ENCODE measurements at regions of chr12 and their contacts with region 1.

Region 1: DNA sequence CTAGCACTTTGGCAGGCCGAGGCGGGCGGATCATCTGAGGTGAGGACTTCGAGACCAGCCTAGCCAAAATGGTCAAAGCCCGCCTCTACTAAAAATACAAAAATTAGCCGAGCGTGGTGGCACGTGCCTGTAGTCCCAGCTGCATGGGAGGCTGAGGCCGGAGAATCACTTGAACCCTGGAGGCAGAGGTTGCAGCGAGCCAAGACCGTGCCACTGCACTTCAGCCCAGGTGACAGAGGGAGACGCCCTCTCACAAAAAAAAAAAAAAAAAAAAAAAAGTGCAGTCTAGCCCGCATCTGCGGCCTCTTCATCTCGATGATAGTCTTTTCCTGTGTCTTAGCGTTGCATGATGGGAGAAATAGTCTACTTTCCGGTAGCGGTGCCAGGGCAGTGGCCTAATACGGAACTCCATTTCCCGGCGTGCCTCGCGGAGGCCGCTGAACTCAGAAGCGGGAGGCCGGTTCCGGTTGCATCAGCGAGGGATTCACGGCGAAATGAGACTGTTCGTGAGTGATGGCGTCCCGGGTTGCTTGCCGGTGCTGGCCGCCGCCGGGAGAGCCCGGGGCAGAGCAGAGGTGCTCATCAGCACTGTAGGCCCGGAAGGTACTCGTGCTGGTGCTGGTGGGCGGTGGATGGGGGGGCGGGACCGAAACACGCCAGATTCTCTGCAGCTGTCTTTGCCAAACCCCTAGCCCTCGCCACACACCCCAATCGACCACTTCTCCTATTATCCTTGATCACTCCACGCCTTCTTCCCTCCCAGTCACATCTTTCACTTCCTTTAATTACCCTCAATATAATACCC is at the start of gene MARS1:
- DNase-seq: peak; percentile 93 to 99 (median 96)

Region 2: DNA sequence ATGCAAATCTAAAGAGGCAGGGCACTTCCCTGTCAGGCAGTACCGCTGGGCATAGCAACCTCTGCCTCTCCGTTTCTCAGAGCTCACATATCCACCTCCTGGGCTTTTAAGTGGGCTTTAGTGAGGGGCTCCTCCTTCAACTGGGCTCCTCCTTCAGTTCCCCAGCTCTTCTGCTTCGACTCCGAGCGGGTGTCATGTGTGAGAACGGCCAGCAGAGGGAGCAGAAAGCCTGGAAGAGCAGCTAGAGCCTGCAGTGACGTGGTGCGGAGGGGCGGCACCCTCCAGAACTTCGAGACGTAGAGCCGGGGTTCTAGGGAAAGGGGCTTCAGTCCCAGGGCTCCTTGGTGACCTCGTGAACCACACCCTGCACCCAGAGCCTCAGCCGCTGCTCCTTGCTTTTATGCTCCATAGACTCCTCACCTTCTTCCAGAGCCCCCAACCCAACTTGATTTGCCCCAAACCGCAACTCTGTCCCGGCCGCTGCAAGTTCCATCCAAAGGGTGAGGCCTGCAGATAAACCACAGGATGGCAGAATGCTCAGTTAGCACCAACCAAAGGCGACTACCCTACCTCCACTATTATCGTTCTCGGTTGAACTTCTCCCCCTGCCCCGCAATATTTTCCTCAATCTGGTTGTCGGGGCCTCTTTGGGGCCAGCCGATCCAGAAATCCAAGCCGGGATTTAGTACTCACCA is 28.6 kb before region 1 on chr12:
- intact Hi-C with region 1: loop called (anchors 2 kb)
- DNase-seq: peak; percentile 89 to 98 (median 94)

Region 3: GRCh38 chr12:57522011-57522886 is 34.5 kb after region 1 on chr12 and contains the start of gene MBD6:
- intact Hi-C with region 1: loop called (anchors 2 kb)
- DNase-seq: peak; percentile 87 to 99 (median 91)

Region 4: DNA sequence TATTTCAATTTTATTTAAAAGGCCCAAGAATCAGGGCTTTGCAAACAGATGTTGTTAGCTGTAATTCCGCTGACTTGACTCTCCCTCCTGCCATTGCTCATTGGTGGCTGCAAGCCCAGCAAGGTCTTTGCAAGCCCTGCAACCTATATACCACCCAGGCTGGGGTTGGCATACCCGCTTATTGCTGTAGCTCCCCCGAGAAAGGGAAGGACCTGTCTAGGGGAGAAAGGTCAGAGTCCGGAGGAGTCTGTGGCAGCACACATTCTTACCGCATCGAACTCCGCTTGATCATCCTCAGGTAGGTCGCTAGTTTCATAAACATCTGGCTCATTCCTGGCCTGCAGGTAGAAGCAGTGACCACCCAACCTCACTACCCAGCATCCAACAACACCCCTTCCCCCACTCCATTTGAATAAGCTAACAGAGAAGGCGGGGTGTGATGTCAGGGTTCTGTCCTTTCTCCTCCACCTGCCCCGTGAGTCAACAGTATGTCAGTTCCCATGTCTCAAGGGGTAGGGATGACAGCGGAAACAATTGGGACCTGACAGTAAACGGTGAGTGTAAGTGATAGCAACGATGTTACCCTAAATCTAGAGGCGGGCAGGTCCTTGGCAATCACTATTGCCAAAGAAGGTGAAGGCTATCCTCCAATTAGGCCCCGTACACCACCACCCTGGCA is 58.1 kb after region 1 on chr12:
- intact Hi-C with region 1: no loop called
- DNase-seq: no peak